ENCODE measurements at regions of chr20 and their contacts with region 1.

Region 1: DNA sequence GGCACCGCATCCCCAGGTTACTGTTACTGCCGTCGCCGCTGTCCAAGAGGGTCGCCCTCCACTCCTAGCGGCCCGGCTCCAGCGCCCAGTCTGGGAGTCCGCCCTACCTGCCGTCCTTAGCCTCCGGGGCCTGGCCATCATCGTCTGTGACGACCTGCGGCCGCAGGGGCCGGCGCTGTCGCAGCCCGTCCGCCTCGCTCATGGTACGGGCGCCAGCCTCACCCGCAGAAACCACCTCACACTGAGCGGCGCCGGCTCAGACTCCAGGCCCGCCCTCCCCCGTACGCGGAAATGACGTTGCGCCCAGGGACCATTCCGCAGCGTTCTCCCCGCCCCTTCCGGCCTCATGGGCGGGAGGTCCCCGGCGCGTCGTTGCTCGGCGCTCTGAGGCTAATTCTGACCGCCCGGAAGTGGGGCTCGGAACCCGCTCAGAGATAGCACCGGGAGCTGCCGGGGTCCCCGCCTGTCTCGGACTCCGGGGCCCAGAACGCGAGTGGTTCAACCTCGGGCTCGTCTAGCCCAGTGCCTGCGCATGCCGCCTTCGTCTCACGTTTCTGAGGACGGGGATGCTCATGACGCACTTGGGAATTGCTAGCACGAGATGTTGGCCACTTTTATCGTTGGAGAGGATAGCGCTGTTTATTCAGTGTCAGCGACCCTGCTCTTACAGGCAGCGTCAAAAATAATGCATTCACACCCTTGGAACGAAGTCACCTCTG is at the start of gene APMAP:
- DNase-seq: peak; percentile 98
- ATAC-seq: peak; percentile 94 to 98 (median 94)
- H3K4me3 ChIP-seq: peak within 1 kb of the TSS; percentile 82
- H3K27ac ChIP-seq: peak within 1 kb of the TSS; percentile 90
- H3K4me1 ChIP-seq: peaks cover 23% of the 10 kb centered on the region
- H3K27me3 ChIP-seq: no peaks in the 10 kb centered on the region
- CTCF ChIP-seq: no peak
- total RNA-seq, gene APMAP: 19.9 to 44.5 (median 24.2) TPM

Region 2: GRCh38 chr20:24872291-24873024 is 120.2 kb before region 1 on chr20:
- intact Hi-C with region 1: no loop called
- DNase-seq: no peak
- ATAC-seq: no peak
- H3K4me3 ChIP-seq: no peak overlapping the region
- H3K27ac ChIP-seq: no peak overlapping the region
- H3K4me1 ChIP-seq: no peaks in the 10 kb centered on the region
- H3K27me3 ChIP-seq: no peaks in the 10 kb centered on the region
- CTCF ChIP-seq: no peak

Region 3: GRCh38 chr20:25032478-25033280 is 40.0 kb after region 1 on chr20:
- intact Hi-C with region 1: loop called in 1 of 2 experiments (anchors 5 kb)
- DNase-seq: peak in 1 of 2 donors; percentile 31
- ATAC-seq: peak; percentile 37 to 57 (median 45)
- H3K4me3 ChIP-seq: no peak overlapping the region
- H3K27ac ChIP-seq: peak overlapping the region; percentile 54
- H3K4me1 ChIP-seq: peaks cover 49% of the 10 kb centered on the region
- H3K27me3 ChIP-seq: no peaks in the 10 kb centered on the region
- CTCF ChIP-seq: no peak

Region 4: GRCh38 chr20:25065625-25066338 is 73.1 kb after region 1 on chr20:
- intact Hi-C with region 1: loop called (anchors 1 kb)
- DNase-seq: peak; percentile 56 to 69
- ATAC-seq: peak; percentile 79 to 96 (median 84)
- H3K4me3 ChIP-seq: no peak overlapping the region
- H3K27ac ChIP-seq: no peak overlapping the region
- H3K4me1 ChIP-seq: no peaks in the 10 kb centered on the region
- H3K27me3 ChIP-seq: peaks cover 0 to 4% (median 0%) of the 10 kb centered on the region in 3 donors
- CTCF ChIP-seq: peak; percentile 83

Region 5: DNA sequence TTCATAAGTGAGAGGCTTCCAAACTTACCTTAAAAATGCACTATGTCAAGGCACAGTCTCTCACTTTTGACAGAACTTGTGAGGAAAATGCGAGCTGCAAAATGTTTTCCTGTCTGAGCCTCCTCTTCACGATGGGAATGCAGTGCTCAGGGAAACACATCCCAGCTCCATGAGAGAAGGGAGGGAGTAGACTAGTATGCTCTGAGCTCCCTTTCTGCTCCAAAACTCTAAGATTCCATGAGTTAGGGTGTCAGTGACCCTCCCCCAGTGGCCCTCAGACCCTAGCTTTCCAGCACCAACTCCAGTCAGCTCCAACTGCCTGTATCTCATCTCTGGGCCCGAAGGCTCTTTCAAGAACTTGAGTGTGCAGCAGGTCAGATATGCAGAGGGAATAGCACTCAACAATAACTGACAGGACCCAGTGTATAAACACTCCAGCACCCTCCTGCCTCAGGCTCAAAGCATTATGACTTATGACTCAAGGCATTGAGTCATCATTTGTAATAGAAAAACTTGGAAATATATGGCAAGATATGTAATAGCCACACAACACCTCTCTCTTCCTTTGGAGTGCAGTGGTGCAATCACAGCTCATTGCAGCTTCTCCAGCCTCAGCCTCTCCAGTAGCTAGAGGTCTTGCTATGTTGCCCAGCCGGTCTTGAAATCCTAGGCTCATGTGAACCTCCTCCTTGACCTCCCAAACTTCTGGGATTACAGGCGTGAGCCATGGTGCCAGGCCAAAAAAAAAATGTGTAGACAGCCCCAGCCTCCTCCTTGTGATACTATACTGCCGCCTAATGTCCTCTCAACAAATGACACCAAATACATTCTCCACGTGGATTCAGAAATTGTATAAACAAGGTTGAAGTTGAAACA is 186.2 kb after region 1 on chr20:
- intact Hi-C with region 1: loop called (anchors 2 to 5 kb)
- DNase-seq: peak in 1 of 2 donors; percentile 55
- ATAC-seq: peak; percentile 86 to 96 (median 91)
- H3K4me3 ChIP-seq: no peak overlapping the region
- H3K27ac ChIP-seq: peak overlapping the region; percentile 25
- H3K4me1 ChIP-seq: peaks cover 5% of the 10 kb centered on the region
- H3K27me3 ChIP-seq: peaks cover 0 to under 1% (median 0%) of the 10 kb centered on the region in 3 donors
- CTCF ChIP-seq: peak; percentile 74

Region 6: DNA sequence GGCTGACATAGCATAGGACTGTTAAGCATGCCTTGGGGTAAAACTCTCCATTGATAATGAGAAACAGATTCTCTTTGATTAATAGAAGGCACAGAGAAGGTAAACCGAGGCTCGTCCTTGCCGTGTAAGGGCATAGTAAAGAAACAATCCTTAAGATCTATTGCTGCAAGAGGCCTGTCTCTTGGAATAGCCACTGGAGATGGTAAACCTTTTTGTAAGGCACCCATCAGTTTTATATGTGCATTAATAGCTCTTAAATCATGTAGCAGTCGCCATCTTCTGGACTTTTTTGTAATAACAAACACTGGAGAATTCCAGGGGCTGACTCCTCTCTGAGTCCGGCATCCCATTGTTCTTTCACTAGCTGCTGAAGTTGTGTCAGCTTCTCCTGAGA is 406.4 kb after region 1 on chr20:
- intact Hi-C with region 1: loop called (anchors 5 kb)
- DNase-seq: no peak
- ATAC-seq: peak; percentile 64 to 92 (median 84)
- H3K4me3 ChIP-seq: no peak overlapping the region
- H3K27ac ChIP-seq: no peak overlapping the region
- H3K4me1 ChIP-seq: no peaks in the 10 kb centered on the region
- H3K27me3 ChIP-seq: no peaks in the 10 kb centered on the region
- CTCF ChIP-seq: peak; percentile 61

Region 7: DNA sequence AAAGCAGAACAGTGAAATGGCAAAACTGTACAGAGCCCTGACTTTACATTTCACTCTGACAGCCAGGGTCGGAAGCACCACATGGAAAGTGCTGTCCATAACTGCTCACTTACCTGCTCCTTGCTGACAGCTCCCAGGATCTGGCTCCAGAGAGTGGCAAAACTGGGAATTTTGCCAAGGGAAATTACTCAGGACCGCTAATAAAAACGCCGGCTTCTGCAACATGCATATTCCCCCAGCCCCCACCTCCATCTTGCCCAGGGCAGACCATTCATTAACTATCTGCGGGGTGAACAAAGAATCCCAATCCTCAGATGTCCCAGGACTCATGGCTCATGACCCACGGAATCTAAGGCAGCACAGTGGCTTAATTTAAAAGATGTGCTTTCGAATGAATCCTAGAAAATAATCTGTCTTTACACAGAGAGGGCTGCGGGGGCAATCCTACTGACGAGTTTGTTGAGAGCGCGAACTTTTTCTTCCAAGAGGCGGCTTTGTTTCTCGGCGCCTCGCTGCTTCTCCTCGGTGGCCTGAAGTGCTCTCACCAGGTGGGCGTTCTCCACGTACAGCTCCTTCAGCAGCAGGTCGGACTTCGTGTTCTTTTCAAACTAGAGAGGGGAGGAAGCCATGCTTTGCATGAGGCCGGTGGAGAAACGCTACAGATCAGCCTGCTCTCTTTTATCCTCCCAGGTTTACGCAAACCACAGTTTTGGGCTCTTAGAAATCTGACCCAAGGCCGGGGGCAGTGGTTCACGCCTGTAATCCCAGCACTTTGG is 460.6 kb after region 1 on chr20:
- intact Hi-C with region 1: no loop called
- DNase-seq: no peak
- ATAC-seq: no peak
- H3K4me3 ChIP-seq: no peak overlapping the region
- H3K27ac ChIP-seq: no peak overlapping the region
- H3K4me1 ChIP-seq: no peaks in the 10 kb centered on the region
- H3K27me3 ChIP-seq: no peaks in the 10 kb centered on the region
- CTCF ChIP-seq: no peak

Measured in psoas muscle (tissue), 8 donors.